Thyroid gland (tissue), 4 donors: ENCODE measurements at regions of chr13 and their contacts with region 1.

Region 1: DNA sequence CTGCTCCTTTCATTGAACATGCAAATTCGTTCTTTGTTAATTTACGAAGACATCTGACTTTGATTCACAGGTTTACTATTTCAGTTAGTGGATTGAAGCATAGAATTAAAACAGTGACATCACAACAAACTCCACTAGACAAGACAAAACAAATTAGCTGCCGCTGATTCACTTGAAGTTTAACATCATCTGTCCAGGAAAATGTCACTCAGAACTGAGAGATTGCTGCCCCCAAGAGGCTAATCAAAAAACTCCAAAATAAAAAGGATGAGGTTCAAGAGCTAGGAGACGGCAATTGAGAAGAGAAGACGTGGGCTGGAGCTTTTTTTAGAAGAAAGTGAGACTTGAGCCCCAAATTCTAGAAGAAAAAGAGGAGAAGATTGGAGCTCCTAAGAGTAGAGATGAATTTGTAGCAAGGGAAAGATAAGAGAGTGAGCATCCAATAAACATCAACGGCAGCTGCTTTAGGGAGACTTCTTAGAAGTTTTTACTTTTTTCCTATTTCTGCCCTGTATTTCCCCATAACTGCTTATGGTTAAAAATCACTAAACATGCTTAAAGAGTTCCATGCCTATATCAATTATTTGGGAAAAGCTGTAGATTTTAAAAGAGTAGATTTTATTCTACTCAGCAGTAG is 40.8 kb upstream of the TPP2 start:
- DNase-seq: no peak
- H3K4me3 ChIP-seq: no peak overlapping the region
- H3K27ac ChIP-seq: no peak overlapping the region
- H3K4me1 ChIP-seq: no peaks in the 10 kb centered on the region
- H3K27me3 ChIP-seq: no peaks in the 10 kb centered on the region
- CTCF ChIP-seq: peak in 5 of 6 experiments; percentile 15 to 61 (median 54)
- POLR2A ChIP-seq: no peak

Region 2: DNA sequence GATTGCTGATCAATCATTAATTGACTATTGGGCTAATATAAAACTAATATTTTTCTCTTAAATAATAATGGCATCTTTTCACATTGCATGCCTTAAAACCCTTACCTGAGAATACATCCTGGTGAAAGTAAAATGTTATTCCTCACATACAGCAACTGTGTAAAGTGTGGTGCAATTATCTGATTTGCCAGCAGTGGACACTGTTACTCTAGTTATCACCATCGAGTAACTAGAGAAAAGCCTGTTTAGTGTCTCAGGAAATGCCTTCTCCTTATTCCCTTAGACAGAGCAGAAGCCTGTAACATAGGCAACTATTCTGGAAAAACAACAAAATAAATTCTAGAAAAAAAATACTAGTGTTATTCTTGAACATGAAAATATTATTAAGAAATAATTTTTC is 614.0 kb before region 1 on chr13:
- intact Hi-C with region 1: loop called (anchors 10 kb)
- DNase-seq: no peak
- H3K4me3 ChIP-seq: no peak overlapping the region
- H3K27ac ChIP-seq: no peak overlapping the region
- H3K4me1 ChIP-seq: no peaks in the 10 kb centered on the region
- H3K27me3 ChIP-seq: no peaks in the 10 kb centered on the region
- CTCF ChIP-seq: peak in 5 of 6 experiments; percentile 33 to 67 (median 54)
- POLR2A ChIP-seq: no peak

Region 3: GRCh38 chr13:102141625-102142472 is 414.2 kb before region 1 on chr13:
- intact Hi-C with region 1: loop called (anchors 10 kb)
- DNase-seq: no peak
- H3K4me3 ChIP-seq: no peak overlapping the region
- H3K27ac ChIP-seq: no peak overlapping the region
- H3K4me1 ChIP-seq: no peaks in the 10 kb centered on the region
- H3K27me3 ChIP-seq: no peaks in the 10 kb centered on the region
- CTCF ChIP-seq: peak; percentile 24 to 61 (median 40)
- POLR2A ChIP-seq: no peak

Region 4: DNA sequence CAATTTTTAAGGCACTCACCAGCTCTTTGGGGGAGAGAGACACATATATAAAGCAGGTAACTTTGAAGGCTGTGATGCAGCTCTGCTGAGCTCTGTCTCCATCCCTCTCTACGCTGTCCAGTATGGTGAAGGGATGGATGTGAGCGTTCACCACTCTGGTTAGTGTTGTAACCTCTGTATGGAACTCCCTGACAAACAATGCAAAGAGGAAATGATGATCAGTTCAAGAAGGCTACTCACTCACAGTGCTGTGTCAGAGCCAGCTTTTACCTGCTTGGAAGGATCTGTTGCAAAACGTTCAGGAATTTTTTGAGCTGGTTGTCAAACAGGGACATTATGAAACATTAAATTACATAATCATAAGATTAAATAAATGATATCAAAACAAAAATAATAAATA is 601.0 kb after region 1 on chr13:
- intact Hi-C with region 1: no loop called
- DNase-seq: no peak
- H3K4me3 ChIP-seq: no peak overlapping the region
- H3K27ac ChIP-seq: no peak overlapping the region
- H3K4me1 ChIP-seq: no peaks in the 10 kb centered on the region
- H3K27me3 ChIP-seq: no peaks in the 10 kb centered on the region
- CTCF ChIP-seq: no peak
- POLR2A ChIP-seq: no peak